PC-9 (cell line): ENCODE measurements at regions of chr17 and their contacts with region 1.

Region 1: DNA sequence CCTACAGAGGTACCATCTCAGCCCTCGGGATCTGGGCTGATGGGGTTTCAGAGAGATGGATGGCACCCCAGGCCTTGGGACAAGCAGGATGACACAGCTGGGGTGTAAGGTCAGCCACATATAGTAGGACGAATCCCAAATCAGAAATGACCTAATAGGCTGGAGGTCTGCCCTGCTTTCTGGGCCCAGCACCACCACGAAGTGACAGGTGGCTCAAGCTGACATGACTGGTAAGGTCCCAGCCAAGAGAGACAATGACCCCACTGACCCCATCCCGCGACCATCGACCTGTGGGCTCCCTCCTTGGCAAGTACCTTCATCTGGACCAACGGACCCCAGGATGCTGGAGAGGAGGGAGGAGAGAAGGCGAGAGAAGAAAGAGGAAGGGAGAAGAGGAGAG is 15.6 kb downstream of the CAMKK1 start:
- DNase-seq: no peak
- H3K4me3 ChIP-seq: no peak overlapping the region
- H3K27ac ChIP-seq: no peak overlapping the region
- H3K4me1 ChIP-seq: no peaks in the 10 kb centered on the region
- H3K27me3 ChIP-seq: no peaks in the 10 kb centered on the region
- CTCF ChIP-seq: no peak

Region 2: DNA sequence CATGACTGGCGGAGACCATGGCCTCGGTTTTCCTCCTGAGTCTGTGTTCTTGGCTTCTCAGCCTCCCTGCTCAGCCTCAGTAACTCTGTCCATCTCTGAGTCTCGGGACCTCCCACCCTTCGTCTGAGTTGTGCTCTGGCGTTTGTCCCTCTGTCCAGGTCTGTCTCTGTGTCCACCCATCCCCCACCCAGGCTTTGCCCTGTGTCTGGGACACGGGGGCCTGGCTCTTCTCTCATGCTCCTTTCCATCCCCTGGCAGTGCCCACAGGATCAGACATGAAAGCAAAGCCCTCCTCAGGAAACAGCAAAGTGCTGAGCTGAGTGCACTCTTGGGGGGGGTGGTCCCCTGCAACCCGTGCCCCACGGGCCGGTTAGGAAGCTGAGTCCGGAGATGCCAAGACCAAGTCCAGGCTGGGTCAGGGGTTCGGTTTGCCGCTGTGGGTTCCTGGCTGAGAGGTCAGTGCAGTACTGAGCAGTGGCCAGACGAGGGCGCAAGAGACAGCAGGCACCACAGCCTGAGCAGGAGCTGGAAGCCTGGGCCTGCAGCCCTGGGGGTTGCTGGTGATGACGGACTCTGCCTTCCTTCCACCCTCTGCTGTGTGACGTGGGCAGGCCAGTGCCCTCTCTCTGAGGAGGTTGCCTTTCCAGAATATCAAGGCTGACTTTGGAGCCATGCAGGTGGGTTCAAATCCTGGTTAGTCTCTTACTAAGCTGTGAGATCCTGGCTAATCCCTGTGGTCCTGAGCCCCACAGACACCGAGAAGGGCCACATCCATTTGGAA is 36.5 kb after region 1 on chr17:
- CTCF ChIA-PET with region 1: no interaction called
- POLR2A ChIA-PET with region 1: interaction called, 10 read pairs
- intact Hi-C with region 1: no loop called
- DNase-seq: peak in 1 of 2 experiments; percentile 83
- H3K4me3 ChIP-seq: no peak overlapping the region
- H3K27ac ChIP-seq: no peak overlapping the region
- H3K4me1 ChIP-seq: no peaks in the 10 kb centered on the region
- H3K27me3 ChIP-seq: no peaks in the 10 kb centered on the region; the same call in 1 of the 2 replicates
- CTCF ChIP-seq: peak; percentile 98

Region 3: GRCh38 chr17:3963237-3964201 is 86.3 kb after region 1 on chr17:
- CTCF ChIA-PET with region 1: no interaction called
- POLR2A ChIA-PET with region 1: no interaction called
- intact Hi-C with region 1: no loop called
- DNase-seq: no peak
- H3K4me3 ChIP-seq: no peak overlapping the region
- H3K27ac ChIP-seq: no peak overlapping the region
- H3K4me1 ChIP-seq: peaks cover 25% of the 10 kb centered on the region
- H3K27me3 ChIP-seq: no peaks in the 10 kb centered on the region
- CTCF ChIP-seq: no peak